Mammary epithelial cell (primary cell): ENCODE measurements at regions of chr5 and their contacts with region 1.

Region 1: GRCh38 chr5:168301593-168302388 is 10.3 kb downstream of the WWC1 start:
- DNase-seq: peak; percentile 77
- H3K4me3 ChIP-seq: no peak overlapping the region
- H3K27ac ChIP-seq: peak overlapping the region; percentile 50
- H3K4me1 ChIP-seq: peaks cover 36% of the 10 kb centered on the region
- H3K27me3 ChIP-seq: no peaks in the 10 kb centered on the region
- CTCF ChIP-seq: no peak

Region 2: DNA sequence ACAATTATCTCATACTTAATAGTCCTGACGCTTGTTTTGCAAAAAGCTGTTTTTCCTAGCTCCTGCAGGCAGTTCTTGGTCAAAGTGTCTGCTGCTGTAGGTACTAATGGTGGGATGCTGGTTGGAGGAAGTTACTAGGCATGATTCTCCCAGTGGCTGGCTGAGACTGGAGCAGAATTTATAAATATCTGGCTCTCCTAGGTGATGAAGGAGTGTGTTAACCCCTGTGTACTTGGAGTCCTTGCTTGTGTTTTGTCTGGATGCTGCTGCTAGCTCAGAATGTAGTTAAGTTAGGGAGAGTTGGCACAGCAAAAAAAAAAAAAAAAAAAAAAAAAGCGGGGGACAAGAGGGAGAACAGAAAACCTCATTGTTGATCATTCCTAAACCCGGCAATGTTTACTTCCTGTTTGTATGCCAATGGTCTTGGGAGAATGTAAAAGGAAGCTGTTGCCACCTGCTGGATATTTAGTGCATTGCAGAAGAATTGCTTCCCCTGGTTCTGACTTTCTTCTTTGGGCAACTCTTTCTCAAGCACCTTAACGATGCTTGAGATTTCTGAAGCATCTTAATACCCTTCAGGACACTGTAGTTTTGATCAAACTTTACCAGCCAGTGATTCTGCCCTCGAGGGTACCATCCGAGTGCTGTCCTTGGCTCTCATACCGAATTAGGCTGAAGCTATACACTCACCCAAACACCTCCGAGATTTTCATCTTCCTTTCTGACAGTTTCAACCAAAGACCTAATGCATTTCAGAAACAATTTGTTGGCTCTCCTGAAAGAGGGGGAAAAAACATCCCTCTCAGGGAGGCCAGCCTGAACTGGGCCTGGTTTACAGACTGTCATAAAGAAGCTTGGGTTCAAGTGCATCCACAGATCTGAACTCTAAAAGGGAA is 82.0 kb before region 1 on chr5:
- CTCF ChIA-PET with region 1: no interaction called
- dilution Hi-C with region 1: no loop called
- in situ Hi-C with region 1: no loop called
- intact Hi-C with region 1: no loop called
- DNase-seq: peak; percentile 60
- H3K4me3 ChIP-seq: no peak overlapping the region
- H3K27ac ChIP-seq: no peak overlapping the region
- H3K4me1 ChIP-seq: no peaks in the 10 kb centered on the region
- H3K27me3 ChIP-seq: no peaks in the 10 kb centered on the region
- CTCF ChIP-seq: peak; percentile 85 to 93

Region 3: GRCh38 chr5:168314735-168315418 is 13.1 kb after region 1 on chr5:
- CTCF ChIA-PET with region 1: no interaction called
- dilution Hi-C with region 1: no loop called
- in situ Hi-C with region 1: no loop called
- intact Hi-C with region 1: loop called (anchors 1 kb)
- DNase-seq: peak; percentile 93
- H3K4me3 ChIP-seq: peak overlapping the region in 1 of 3 experiments; percentile 1
- H3K27ac ChIP-seq: peak overlapping the region; percentile 61
- H3K4me1 ChIP-seq: peaks cover 36% of the 10 kb centered on the region
- H3K27me3 ChIP-seq: no peaks in the 10 kb centered on the region
- CTCF ChIP-seq: peak; percentile 11 to 37

Region 4: DNA sequence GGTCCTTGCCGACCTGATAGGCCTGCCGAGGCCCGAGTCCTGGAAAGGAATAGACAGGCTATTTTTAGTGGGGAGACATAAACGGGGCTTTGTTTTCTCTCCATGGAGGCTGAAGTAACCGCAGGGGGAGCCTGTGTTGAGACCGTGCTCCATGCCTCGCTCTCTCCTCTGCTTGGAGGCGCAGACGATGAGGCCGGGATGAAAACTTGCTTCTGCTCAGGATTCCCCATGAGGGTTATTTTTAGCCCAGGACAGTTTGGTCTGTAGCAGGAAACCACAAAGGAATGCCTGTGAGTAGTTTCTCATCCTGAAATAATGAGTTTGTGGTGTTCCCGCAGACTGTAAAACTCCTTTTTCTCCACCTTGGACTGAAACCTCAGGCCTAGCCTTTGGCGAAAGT is 102.6 kb after region 1 on chr5:
- CTCF ChIA-PET with region 1: no interaction called
- dilution Hi-C with region 1: loop called (anchors 5 kb)
- in situ Hi-C with region 1: no loop called
- intact Hi-C with region 1: no loop called
- DNase-seq: peak; percentile 92
- H3K4me3 ChIP-seq: no peak overlapping the region
- H3K27ac ChIP-seq: peak overlapping the region; percentile 20
- H3K4me1 ChIP-seq: peaks cover 44% of the 10 kb centered on the region
- H3K27me3 ChIP-seq: no peaks in the 10 kb centered on the region
- CTCF ChIP-seq: no peak